Adrenal gland (tissue), 19 donors: ENCODE measurements at regions of chr16 and their contacts with region 1.

Region 1: DNA sequence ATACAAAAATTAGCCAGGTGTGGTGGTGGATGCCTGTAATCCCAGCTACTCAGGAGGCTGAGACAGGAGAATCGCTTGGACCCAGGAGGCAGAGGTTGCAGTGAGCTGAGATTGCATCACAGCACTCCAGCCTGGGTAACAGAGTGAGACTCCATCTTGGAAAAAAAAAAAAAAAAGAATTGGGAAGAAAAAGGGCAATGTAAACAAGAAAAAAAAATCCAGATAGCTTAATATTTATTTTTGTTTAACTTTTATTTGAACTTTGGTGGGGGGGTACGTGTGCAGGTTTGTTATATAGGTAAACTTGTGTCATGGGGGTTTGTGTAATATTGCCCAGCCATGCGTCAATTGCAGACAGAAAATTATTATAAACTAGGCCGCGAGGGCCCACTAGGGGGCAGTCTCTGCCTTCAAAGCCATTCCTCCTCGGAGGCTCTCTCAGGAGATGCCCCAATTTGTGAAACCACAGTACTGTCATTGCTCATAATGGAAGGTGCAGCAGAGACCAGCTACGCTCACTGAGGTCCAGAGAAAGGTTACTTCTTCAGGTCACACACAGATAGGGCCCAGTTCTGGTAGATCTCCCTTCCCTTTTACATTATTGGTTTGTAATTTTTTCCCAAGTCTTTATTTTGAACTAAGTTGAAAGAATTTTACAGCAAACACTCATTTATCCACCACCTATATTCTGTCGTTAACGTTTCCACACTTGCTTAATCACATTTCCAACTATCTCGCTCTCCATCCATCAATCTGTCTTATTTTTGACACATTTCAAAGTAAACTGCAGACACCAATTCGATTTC is 206.2 kb downstream of the PRKCB start:
- DNase-seq: peak; percentile 53 to 86 (median 73)
- H3K4me3 ChIP-seq: no peak overlapping the region
- H3K27ac ChIP-seq: no peak overlapping the region
- H3K4me1 ChIP-seq: no peaks in the 10 kb centered on the region
- H3K27me3 ChIP-seq: no peaks in the 10 kb centered on the region
- CTCF ChIP-seq: peak; percentile 65 to 84 (median 72)
- POLR2A ChIP-seq: no peak

Region 2: DNA sequence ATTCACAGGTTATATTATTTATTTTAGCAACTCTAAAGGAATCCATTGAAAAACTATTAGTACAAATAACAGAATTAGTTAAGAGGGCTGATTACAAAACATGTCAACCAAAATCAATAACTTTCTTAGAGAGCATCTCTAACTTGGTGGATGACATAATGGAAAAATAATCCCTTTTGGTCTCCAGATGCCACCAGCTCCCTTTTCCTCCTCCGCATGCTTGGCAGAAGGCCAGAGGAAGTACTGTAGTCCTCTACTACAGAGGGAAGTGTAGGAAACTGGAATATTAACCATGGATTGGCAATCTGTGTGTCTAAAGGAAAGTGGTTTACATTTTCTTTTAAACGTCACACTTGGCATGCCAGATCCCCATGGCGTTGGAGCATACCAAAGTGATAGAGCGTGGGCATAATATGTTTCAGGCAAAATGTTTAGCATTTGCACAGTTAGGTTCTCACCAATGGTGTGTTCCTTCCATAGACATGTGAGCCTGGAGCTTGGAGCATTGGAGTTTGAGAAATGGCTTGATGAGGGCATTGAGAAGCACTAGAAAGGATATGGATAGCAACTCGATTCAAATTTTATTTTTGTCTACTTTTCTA is 100.0 kb before region 1 on chr16:
- intact Hi-C with region 1: no loop called
- DNase-seq: peak in 1 of 7 donors; percentile 4
- H3K4me3 ChIP-seq: no peak overlapping the region
- H3K27ac ChIP-seq: no peak overlapping the region
- H3K4me1 ChIP-seq: no peaks in the 10 kb centered on the region
- H3K27me3 ChIP-seq: no peaks in the 10 kb centered on the region
- CTCF ChIP-seq: no peak
- POLR2A ChIP-seq: no peak

Region 3: DNA sequence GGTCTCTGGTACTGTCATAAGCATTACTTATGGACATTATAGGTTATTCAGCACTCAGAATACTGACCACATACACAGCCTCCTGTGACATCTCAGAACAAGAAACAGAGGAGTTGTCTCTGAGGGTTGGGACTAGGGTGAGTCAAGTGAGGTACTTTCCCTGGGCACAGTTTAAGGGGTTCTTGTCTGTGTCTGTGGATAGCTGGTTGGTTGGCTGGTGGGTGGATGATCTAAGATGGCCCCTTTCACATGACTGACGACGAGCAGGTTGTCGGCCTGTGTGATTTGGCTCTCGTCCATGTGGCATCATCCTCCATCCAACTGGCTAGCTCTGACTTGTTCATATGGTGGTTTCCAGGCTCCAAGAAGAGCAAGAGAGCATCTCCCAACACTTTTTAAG is 42.4 kb before region 1 on chr16:
- intact Hi-C with region 1: no loop called
- DNase-seq: no peak
- H3K4me3 ChIP-seq: no peak overlapping the region
- H3K27ac ChIP-seq: no peak overlapping the region
- H3K4me1 ChIP-seq: no peaks in the 10 kb centered on the region
- H3K27me3 ChIP-seq: no peaks in the 10 kb centered on the region
- CTCF ChIP-seq: no peak
- POLR2A ChIP-seq: no peak

Region 4: DNA sequence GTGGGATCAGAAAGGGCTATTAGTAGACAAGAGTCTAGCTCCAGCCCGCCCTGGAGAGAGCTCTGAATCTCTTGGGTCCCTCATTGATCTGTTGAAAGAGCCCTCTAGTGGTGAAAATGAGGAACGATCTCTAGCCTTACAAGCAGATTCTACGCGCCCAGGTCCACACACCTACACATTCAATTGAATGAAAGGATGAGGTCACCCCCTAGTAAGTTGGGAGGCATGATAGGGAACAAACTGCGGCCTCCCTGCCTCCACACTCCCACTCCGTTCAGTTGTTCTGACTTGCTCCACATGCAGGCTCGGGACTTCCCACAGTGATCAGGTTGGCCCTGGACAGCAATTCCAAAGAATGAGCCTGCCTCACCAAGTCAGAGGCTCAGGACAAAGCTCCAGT is 211.2 kb after region 1 on chr16:
- intact Hi-C with region 1: loop called in 1 of 2 experiments (anchors 10 kb)
- DNase-seq: peak in 5 of 7 donors; percentile 15 to 61 (median 32)
- H3K4me3 ChIP-seq: no peak overlapping the region
- H3K27ac ChIP-seq: no peak overlapping the region
- H3K4me1 ChIP-seq: no peaks in the 10 kb centered on the region
- H3K27me3 ChIP-seq: peaks cover 14% of the 10 kb centered on the region
- CTCF ChIP-seq: peak; percentile 38 to 66 (median 57)
- POLR2A ChIP-seq: no peak

Region 5: GRCh38 chr16:24504472-24505345 is 462.7 kb after region 1 on chr16:
- intact Hi-C with region 1: loop called (anchors 5 kb)
- DNase-seq: peak; percentile 43 to 75 (median 53)
- H3K4me3 ChIP-seq: no peak overlapping the region
- H3K27ac ChIP-seq: no peak overlapping the region
- H3K4me1 ChIP-seq: no peaks in the 10 kb centered on the region
- H3K27me3 ChIP-seq: peaks cover 15% of the 10 kb centered on the region
- CTCF ChIP-seq: peak; percentile 51 to 78 (median 67)
- POLR2A ChIP-seq: no peak